GM23248 (cell line): ENCODE measurements at regions of chr20 and their contacts with region 1.

Region 1: DNA sequence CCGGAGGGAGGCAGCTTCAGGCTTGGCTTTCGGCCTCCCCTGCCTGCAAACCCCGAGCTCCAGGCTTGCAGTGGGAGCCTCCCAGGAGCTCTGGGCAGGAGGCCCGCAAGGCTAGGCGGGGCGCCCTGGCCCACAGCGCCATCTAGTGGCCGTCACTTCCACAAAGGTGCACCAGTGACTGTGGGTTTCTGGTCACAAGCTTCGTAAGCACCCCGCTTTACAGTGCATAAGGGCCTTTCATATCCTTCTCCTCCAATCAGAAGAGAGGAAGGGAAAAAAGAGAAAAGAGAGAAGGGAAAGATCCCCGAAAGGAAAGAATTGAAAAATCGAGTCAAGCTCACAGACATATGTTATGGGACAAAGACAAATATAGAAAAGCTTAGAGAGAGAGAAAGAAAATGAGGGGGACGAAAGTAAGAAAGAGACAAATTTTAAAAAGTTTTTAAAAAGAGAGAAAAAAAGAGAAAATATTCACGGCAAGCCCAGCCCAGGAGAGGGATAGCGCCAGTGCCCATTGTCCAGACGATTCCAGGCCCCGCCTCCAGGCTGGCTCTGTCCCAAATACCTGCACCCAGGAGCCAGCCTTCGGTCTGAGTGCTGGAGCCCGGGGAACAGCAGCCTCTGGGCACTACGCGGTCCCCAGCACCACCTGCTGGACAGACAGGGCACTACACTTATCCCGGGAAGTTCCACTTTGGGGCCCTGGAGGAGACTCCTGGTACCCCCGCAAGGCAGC is 207.1 kb downstream of the PREX1 start:
- DNase-seq: peak; percentile 80
- H3K4me3 ChIP-seq: peak overlapping the region; percentile 48
- H3K27ac ChIP-seq: no peak overlapping the region
- H3K4me1 ChIP-seq: peaks cover 7% of the 10 kb centered on the region
- H3K27me3 ChIP-seq: no peaks in the 10 kb centered on the region; the same call in 1 of the 2 replicates

Region 2: GRCh38 chr20:47672166-47672565 is 948.5 kb before region 1 on chr20:
- in situ Hi-C with region 1: loop called (anchors 5 kb)
- DNase-seq: no peak
- H3K4me3 ChIP-seq: no peak overlapping the region
- H3K27ac ChIP-seq: no peak overlapping the region
- H3K4me1 ChIP-seq: no peaks in the 10 kb centered on the region
- H3K27me3 ChIP-seq: no peaks in the 10 kb centered on the region

Region 3: DNA sequence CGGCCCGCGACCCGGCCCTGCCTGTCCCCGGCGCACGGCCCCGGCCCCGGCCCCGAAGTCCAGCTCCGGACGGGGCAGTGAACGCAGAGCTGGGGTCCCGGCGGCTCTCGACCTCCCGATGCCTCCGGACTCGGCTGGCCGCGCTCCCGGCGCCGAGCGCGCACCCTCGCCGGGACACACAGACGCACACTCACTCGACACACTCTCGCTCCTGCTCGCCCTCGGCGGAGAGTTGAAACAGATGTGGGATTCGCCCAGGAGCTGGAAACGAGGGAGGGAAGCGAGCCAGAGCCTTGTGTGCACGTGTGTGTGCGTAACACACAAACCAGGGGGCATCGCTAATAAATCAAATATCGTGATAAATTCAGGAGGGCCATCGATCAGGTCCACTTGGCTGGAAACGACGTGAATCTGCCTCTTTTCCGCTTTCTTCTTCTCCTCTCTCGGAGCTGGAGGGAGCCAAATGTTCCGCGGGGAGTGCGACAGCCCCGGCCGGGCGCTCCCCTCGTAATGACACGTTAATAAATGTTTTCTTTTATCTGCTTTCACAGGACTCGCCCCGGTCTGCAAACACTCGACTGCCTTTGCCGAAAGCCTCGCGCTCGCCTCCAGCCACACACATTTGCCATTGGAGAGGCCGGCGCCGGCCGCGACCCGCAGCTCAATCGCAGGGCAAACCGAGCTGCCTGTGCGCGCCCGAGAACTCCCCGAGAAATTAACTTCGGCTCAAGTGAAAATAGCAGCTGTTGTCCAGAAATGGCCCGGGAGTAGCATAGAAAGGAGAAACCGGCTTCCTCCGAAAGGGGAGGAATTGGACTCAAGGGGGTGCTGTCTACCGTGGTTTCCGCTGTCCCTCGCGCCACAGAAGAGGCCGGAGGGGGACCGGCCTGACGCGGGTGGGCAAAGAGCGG is 834.6 kb before region 1 on chr20:
- in situ Hi-C with region 1: loop called (anchors 10 kb)
- DNase-seq: peak; percentile 84
- H3K4me3 ChIP-seq: peak overlapping the region; percentile 75
- H3K27ac ChIP-seq: no peak overlapping the region
- H3K4me1 ChIP-seq: peaks cover 7% of the 10 kb centered on the region
- H3K27me3 ChIP-seq: peaks cover 55% of the 10 kb centered on the region

Region 4: DNA sequence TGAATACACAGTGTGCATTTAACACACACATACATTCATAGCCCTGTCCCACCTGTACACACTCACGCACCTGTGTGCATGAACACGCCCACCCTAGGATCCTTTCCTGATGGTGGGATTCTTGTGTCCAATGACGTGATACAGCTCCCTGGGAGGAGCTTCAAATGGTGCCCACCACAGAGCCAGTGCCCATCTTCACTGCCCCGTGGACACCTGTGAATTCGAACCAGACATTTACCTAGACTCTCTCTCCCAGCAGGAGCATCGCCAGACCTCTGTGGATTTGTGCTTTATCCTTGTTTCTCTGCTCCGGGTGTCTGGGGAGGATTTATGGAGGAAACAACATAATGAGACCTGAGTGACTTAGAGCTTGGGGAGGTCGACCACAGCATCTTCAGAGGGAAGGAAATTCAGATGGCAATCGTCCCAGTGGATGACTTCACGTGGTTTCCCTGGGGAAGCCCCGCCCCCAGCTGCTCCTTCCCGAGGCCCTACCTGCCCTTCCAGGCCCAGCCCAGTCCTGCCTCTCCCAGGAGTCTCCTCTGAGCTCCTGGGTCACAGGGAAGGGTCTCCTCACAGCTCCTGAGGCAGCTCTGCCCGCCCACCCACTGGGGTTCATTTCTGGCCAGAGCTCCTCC is 405.3 kb before region 1 on chr20:
- in situ Hi-C with region 1: loop called (anchors 25 kb)
- DNase-seq: no peak
- H3K4me3 ChIP-seq: no peak overlapping the region
- H3K27ac ChIP-seq: no peak overlapping the region
- H3K4me1 ChIP-seq: no peaks in the 10 kb centered on the region
- H3K27me3 ChIP-seq: peaks cover 4% of the 10 kb centered on the region; the same call in 1 of the 2 replicates